PC-9 (cell line): ENCODE measurements at regions of chr2 and their contacts with region 1.

Region 1: GRCh38 chr2:134137182-134137611 is 116.7 kb upstream of the MGAT5 start:
- DNase-seq: peak in 1 of 2 experiments; percentile 75
- H3K4me3 ChIP-seq: no peak overlapping the region
- H3K27ac ChIP-seq: no peak overlapping the region
- H3K4me1 ChIP-seq: 0 out of 2 replicates have a peak, but pooled peaks cover 11% of the 10 kb centered on the region
- H3K27me3 ChIP-seq: no peaks in the 10 kb centered on the region
- CTCF ChIP-seq: no peak

Region 2: DNA sequence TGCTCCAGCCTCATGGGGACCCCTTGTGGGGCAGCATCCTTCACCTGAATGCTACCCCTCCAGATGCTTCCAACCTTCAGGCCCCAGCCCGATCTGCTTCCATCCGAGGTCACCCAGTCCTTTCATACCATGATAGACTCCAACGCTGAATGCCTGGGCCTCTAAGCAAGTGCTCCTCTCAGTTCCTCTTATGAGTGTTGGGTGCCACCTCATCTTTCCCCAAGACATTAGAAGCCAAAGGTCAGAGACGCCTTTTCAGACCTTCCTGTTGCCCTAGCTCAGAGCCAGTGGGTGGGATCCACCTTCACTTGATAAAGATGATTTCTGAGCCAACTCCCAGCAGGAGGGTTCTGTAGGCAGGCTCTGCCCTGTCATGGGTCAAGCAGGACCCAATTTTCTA is 57.8 kb before region 1 on chr2:
- CTCF ChIA-PET with region 1: no interaction called
- POLR2A ChIA-PET with region 1: no interaction called
- intact Hi-C with region 1: no loop called
- DNase-seq: no peak
- H3K4me3 ChIP-seq: no peak overlapping the region
- H3K27ac ChIP-seq: no peak overlapping the region
- H3K4me1 ChIP-seq: no peaks in the 10 kb centered on the region
- H3K27me3 ChIP-seq: peaks cover 36% of the 10 kb centered on the region
- CTCF ChIP-seq: no peak

Region 3: GRCh38 chr2:134189009-134189720 is 52.0 kb after region 1 on chr2:
- CTCF ChIA-PET with region 1: no interaction called
- POLR2A ChIA-PET with region 1: no interaction called
- intact Hi-C with region 1: loop called (anchors 1 kb)
- DNase-seq: peak; percentile 67 to 95
- H3K4me3 ChIP-seq: peak overlapping the region; percentile 34; the same call in 1 of the 2 replicates
- H3K27ac ChIP-seq: peak overlapping the region; percentile 99
- H3K4me1 ChIP-seq: peaks cover 29% of the 10 kb centered on the region
- H3K27me3 ChIP-seq: no peaks in the 10 kb centered on the region
- CTCF ChIP-seq: no peak